PC-9 (cell line): ENCODE measurements at regions of chr16 and their contacts with region 1.

Region 1: GRCh38 chr16:22190776-22191531 is 15.1 kb upstream of the EEF2K start:
- DNase-seq: peak; percentile 94 to 100
- H3K4me3 ChIP-seq: peak overlapping the region; percentile 77
- H3K27ac ChIP-seq: peak overlapping the region; percentile 59
- H3K4me1 ChIP-seq: peaks cover 19% of the 10 kb centered on the region
- H3K27me3 ChIP-seq: no peaks in the 10 kb centered on the region
- CTCF ChIP-seq: no peak

Region 2: GRCh38 chr16:21656795-21657768 is 533.9 kb before region 1 on chr16:
- CTCF ChIA-PET with region 1: interaction called, 7 read pairs
- POLR2A ChIA-PET with region 1: no interaction called
- intact Hi-C with region 1: loop called (anchors 1 kb)
- DNase-seq: peak; percentile 24 to 39
- H3K4me3 ChIP-seq: no peak overlapping the region
- H3K27ac ChIP-seq: no peak overlapping the region
- H3K4me1 ChIP-seq: no peaks in the 10 kb centered on the region
- H3K27me3 ChIP-seq: no peaks in the 10 kb centered on the region
- CTCF ChIP-seq: peak; percentile 89

Region 3: GRCh38 chr16:22001591-22001990 is 189.4 kb before region 1 on chr16:
- CTCF ChIA-PET with region 1: interaction called, 6 read pairs
- POLR2A ChIA-PET with region 1: no interaction called
- intact Hi-C with region 1: loop called (anchors 1 kb)
- DNase-seq: peak in 1 of 2 experiments; percentile 81
- H3K4me3 ChIP-seq: peak overlapping the region; percentile 48; the same call in 1 of the 2 replicates
- H3K27ac ChIP-seq: peak overlapping the region; percentile 54
- H3K4me1 ChIP-seq: peaks cover 20% of the 10 kb centered on the region
- H3K27me3 ChIP-seq: no peaks in the 10 kb centered on the region
- CTCF ChIP-seq: no peak

Region 4: GRCh38 chr16:22098405-22099255 is 92.3 kb before region 1 on chr16:
- CTCF ChIA-PET with region 1: interaction called, 14 read pairs
- POLR2A ChIA-PET with region 1: no interaction called
- intact Hi-C with region 1: loop called (anchors 5 kb)
- DNase-seq: peak; percentile 27 to 55
- H3K4me3 ChIP-seq: peak overlapping the region; percentile 34; the same call in 1 of the 2 replicates
- H3K27ac ChIP-seq: no peak overlapping the region
- H3K4me1 ChIP-seq: no peaks in the 10 kb centered on the region
- H3K27me3 ChIP-seq: no peaks in the 10 kb centered on the region
- CTCF ChIP-seq: peak; percentile 66

Region 5: GRCh38 chr16:22297114-22297878 is 106.3 kb after region 1 on chr16 and contains the start of gene POLR3E:
- CTCF ChIA-PET with region 1: interaction called, 5 read pairs
- POLR2A ChIA-PET with region 1: no interaction called
- intact Hi-C with region 1: loop called (anchors 1 kb)
- DNase-seq: peak; percentile 89 to 100
- H3K4me3 ChIP-seq: peak within 1 kb of the TSS; percentile 78
- H3K27ac ChIP-seq: peak within 1 kb of the TSS; percentile 84
- H3K4me1 ChIP-seq: no peaks in the 10 kb centered on the region
- H3K27me3 ChIP-seq: no peaks in the 10 kb centered on the region
- CTCF ChIP-seq: peak; percentile 86
- total RNA-seq, gene POLR3E: 65.2 and 70.9 TPM in 2 replicates